Transverse colon (tissue), 4 donors: ENCODE measurements at regions of chr9 and their contacts with region 1.

Region 1: DNA sequence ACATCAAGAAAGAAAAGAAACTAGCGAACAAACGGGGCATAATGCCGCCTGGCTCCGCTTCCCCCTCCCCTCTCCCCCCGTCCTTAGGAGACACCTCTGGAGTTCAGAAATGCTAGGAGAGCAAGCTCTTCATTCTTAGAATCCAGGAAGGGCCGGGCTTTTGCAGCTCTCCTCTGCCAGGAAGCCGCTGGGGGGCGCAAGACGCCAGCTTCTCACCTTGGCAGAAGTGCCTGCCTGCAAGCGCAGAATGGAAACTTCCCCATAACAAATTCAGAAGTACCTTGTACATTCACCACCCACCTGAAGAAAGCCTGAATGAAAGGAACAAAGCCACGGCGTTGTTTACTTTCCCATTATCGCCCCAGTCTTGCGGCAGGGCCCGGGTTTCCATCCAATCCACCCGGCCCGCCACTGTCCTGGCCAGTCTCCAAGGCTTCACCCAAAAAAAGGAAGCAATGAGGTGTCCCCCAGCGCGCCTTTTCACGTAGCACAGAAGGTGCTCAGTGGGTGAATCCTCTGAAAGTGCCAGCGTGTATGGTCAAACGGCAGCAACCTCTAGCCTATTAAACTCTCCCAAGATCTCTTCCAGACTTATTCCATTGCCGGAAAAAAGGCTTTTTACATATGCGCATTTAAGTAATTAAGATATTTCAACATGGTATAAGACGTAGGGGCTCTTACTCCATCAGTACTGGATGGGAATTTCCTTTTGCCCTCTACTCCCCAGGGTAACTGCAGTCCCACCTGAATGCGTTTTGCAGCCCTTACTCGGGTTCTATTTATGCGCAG is 1.6 kb upstream of the GADD45G start:
- DNase-seq: peak; percentile 95
- H3K4me3 ChIP-seq: peak overlapping the region; percentile 10 to 76 (median 46)
- H3K27ac ChIP-seq: peak overlapping the region; percentile 91 to 97 (median 94)
- H3K4me1 ChIP-seq: peaks cover 16 to 37% (median 34%) of the 10 kb centered on the region in 4 donors
- H3K27me3 ChIP-seq: no peaks in the 10 kb centered on the region
- CTCF ChIP-seq: peak; percentile 87 to 94 (median 91)
- EP300 ChIP-seq: no peak
- POLR2A ChIP-seq: no peak

Region 2: DNA sequence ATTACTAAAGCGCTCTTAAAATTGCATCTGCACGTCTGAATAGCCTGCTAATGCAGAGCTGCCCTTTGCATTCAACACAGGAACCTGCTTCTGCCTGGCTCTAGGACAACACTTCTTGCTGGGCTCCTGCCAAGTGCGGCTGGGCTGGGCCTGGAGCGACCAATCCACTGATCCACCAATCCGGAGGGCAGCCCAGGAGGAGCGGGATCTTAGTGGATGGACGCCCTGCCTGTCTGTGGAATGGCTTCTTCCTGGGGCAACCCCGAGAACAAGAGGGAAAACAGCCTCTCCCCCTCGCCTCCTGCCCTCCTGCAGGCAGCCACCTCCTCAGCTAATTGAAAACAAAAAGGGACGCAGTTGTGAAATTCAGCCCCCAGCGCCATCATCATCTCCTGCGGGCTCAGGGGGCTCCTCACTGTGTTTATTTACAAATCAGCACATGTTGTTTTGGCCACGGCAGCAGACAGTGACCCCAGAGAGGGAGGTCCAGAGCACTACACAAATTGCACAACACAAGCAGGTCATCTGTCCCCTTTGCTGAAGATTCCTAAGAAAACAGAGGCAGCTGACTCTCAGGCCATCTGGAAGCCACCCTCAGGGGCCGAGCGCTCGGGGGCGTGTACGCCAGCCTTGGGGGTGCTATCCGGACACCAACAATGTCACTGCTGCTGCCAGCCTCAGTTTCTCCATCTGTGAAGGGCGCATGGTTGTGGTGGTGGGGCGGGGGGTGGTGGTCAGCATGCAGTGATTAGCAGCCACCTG is 59.0 kb after region 1 on chr9:
- in situ Hi-C with region 1: no loop called
- intact Hi-C with region 1: loop called (anchors 5 kb)
- DNase-seq: peak; percentile 98
- H3K4me3 ChIP-seq: peak overlapping the region in 2 of 4 donors; percentile 15 to 34
- H3K27ac ChIP-seq: peak overlapping the region; percentile 78 to 89 (median 84)
- H3K4me1 ChIP-seq: peaks cover 18 to 68% (median 48%) of the 10 kb centered on the region in 4 donors
- H3K27me3 ChIP-seq: no peaks in the 10 kb centered on the region
- CTCF ChIP-seq: no peak
- EP300 ChIP-seq: no peak
- POLR2A ChIP-seq: peak; percentile 53

Region 3: GRCh38 chr9:89919169-89919681 is 316.1 kb after region 1 on chr9:
- in situ Hi-C with region 1: loop called in 2 of 4 experiments (anchors 10 to 25 kb)
- intact Hi-C with region 1: no loop called
- DNase-seq: peak; percentile 60
- H3K4me3 ChIP-seq: no peak overlapping the region
- H3K27ac ChIP-seq: no peak overlapping the region
- H3K4me1 ChIP-seq: no peaks in the 10 kb centered on the region
- H3K27me3 ChIP-seq: no peaks in the 10 kb centered on the region
- CTCF ChIP-seq: peak in 4 of 5 experiments; percentile 18 to 54 (median 37)
- EP300 ChIP-seq: no peak
- POLR2A ChIP-seq: no peak

Region 4: GRCh38 chr9:89941875-89942274 is 338.7 kb after region 1 on chr9:
- in situ Hi-C with region 1: no loop called
- intact Hi-C with region 1: loop called (anchors 10 kb)
- DNase-seq: no peak
- H3K4me3 ChIP-seq: no peak overlapping the region
- H3K27ac ChIP-seq: peak overlapping the region; percentile 13 to 77 (median 46)
- H3K4me1 ChIP-seq: peaks cover 5 to 13% (median 9%) of the 10 kb centered on the region in 4 donors
- H3K27me3 ChIP-seq: no peaks in the 10 kb centered on the region
- CTCF ChIP-seq: no peak
- EP300 ChIP-seq: peak; percentile 55
- POLR2A ChIP-seq: no peak

Region 5: DNA sequence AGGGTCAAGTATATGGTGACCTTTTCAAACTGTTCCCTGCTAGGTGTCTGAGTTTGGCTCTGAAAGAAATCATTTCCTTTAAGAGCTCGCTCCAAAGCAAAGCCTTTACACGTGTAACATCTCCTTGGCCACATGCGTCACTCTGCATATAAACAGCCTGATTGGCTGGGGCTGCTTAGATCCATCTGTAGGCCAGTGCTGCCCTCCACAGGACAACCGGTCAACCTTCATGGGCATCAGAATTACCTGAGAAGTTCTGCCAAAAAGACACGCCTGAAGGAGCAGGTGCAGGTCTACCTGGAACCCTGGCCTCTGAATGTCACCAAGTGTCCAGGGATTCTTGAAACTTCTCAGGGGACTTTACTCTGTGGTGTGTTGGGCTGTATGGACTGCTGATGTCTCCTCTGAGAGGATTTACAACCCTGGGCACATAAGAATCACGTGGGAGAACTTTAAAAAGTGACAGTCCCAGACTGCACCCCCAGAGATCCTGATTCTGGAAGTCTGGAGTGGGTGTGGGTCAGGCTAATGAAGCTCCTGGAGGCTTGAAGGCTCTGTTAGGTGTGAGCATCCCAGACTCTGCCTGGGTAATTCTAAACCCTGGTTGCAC is 499.2 kb after region 1 on chr9:
- in situ Hi-C with region 1: loop called (anchors 5 kb)
- intact Hi-C with region 1: no loop called
- DNase-seq: peak; percentile 91
- H3K4me3 ChIP-seq: no peak overlapping the region
- H3K27ac ChIP-seq: no peak overlapping the region
- H3K4me1 ChIP-seq: peaks cover 0 to 10% (median 2%) of the 10 kb centered on the region in 4 donors
- H3K27me3 ChIP-seq: no peaks in the 10 kb centered on the region
- CTCF ChIP-seq: peak; percentile 76 to 96 (median 78)
- EP300 ChIP-seq: no peak
- POLR2A ChIP-seq: no peak